IMR-90 (cell line): ENCODE measurements at regions of chr5 and their contacts with region 1.

Region 1: GRCh38 chr5:38994324-38994927 is 79.8 kb downstream of the RICTOR start:
- DNase-seq: peak; percentile 76
- ATAC-seq: peak; percentile 63
- H3K4me3 ChIP-seq: no peak overlapping the region
- H3K27ac ChIP-seq: no peak overlapping the region
- H3K4me1 ChIP-seq: no peaks in the 10 kb centered on the region
- H3K27me3 ChIP-seq: no peaks in the 10 kb centered on the region
- CTCF ChIP-seq: peak; percentile 67
- POLR2A ChIP-seq: no peak
- RAD21 ChIP-seq: peak; percentile 81

Region 2: DNA sequence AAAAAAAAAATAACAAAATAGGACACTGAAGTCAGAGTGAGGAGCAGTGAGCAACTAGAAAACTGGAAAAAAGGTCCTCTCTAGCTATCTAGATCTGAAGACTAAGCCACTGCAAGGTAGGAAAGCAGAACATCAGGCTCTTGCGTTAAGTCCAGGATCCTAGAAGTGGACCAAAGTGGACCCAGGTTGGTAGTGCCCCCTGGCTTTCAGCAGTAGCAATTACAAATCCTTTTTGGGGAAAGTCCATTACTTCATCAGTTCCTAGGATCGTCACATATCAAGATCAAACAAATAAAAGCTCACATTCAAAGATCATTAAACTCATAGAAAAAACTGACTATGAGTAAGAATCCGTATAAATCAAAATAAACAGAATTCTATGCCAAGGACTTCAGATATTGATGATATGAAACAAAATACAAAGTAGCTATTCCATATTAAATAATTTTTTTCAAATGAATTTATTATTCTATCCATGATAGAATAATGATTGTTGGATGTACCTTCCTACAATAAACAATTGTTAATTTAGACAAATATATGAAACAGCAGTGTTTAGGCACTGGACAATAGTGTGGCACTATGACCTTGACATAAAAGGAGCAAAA is 86.3 kb after region 1 on chr5:
- CTCF ChIA-PET with region 1: no interaction called
- POLR2A ChIA-PET with region 1: no interaction called
- dilution Hi-C with region 1: no loop called
- in situ Hi-C with region 1: no loop called
- intact Hi-C with region 1: loop called (anchors 1 kb)
- DNase-seq: peak; percentile 73
- ATAC-seq: peak; percentile 86
- H3K4me3 ChIP-seq: no peak overlapping the region
- H3K27ac ChIP-seq: no peak overlapping the region
- H3K4me1 ChIP-seq: no peaks in the 10 kb centered on the region
- H3K27me3 ChIP-seq: no peaks in the 10 kb centered on the region
- CTCF ChIP-seq: peak; percentile 75
- POLR2A ChIP-seq: no peak
- RAD21 ChIP-seq: peak; percentile 70

Region 3: GRCh38 chr5:39106322-39106721 is 111.9 kb after region 1 on chr5:
- CTCF ChIA-PET with region 1: no interaction called
- POLR2A ChIA-PET with region 1: no interaction called
- dilution Hi-C with region 1: no loop called
- in situ Hi-C with region 1: no loop called
- intact Hi-C with region 1: loop called (anchors 1 kb)
- DNase-seq: peak; percentile 27
- ATAC-seq: no peak
- H3K4me3 ChIP-seq: no peak overlapping the region
- H3K27ac ChIP-seq: no peak overlapping the region
- H3K4me1 ChIP-seq: peaks cover 9% of the 10 kb centered on the region
- H3K27me3 ChIP-seq: no peaks in the 10 kb centered on the region
- CTCF ChIP-seq: peak; percentile 45
- POLR2A ChIP-seq: no peak
- RAD21 ChIP-seq: no peak

Region 4: DNA sequence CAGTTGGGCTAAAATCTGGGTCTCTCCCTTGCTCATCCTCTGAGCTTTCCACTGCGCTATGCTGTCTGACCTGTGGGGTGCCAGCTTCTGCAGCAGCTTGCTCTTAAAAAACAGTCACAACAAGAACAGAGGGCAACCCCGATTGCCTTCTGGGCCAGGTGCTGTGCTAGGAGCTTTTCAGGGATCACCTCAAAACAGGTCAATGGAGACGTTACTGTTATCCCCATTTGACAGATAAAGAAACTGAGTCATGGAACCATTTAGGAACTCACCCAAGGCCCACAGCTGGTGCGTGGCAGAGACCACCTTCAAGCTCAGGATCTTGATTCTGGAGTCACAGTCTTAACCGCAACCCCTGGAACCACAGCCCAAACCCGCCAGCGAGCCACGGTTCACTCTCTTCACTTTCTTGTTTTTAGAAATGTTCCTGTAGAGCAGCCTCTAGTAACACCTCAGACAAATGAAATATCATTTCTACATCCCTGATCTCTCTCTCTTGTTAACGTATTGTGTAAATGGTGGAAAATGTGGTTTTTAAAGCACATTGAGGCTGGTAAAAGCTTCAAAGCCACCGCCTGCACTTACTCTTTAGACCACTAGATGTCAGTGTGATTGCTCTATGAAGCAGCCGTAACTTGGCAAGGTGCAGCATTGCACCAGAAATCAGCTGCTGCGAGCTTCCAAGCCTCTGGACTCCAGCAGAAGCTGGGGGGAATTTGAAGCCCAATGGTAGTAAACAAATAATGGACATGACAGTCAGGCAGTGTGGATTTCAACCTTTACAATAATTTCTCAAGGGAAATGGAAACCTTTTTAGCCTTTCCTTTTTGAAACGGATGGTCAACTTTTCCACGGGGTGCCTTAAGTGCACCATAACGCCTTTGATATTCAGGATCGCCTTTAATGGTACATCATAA is 223.2 kb after region 1 on chr5:
- CTCF ChIA-PET with region 1: no interaction called
- POLR2A ChIA-PET with region 1: no interaction called
- dilution Hi-C with region 1: no loop called
- in situ Hi-C with region 1: no loop called
- intact Hi-C with region 1: loop called (anchors 10 kb)
- DNase-seq: peak; percentile 80
- ATAC-seq: peak; percentile 94
- H3K4me3 ChIP-seq: no peak overlapping the region
- H3K27ac ChIP-seq: no peak overlapping the region
- H3K4me1 ChIP-seq: no peaks in the 10 kb centered on the region
- H3K27me3 ChIP-seq: no peaks in the 10 kb centered on the region; the same call in none of the 2 replicates
- CTCF ChIP-seq: peak; percentile 89
- POLR2A ChIP-seq: no peak
- RAD21 ChIP-seq: peak; percentile 76

Region 5: GRCh38 chr5:39228596-39228995 is 234.2 kb after region 1 on chr5:
- CTCF ChIA-PET with region 1: no interaction called
- POLR2A ChIA-PET with region 1: no interaction called
- dilution Hi-C with region 1: no loop called
- in situ Hi-C with region 1: no loop called
- intact Hi-C with region 1: no loop called
- DNase-seq: no peak
- ATAC-seq: no peak
- H3K4me3 ChIP-seq: no peak overlapping the region
- H3K27ac ChIP-seq: no peak overlapping the region
- H3K4me1 ChIP-seq: no peaks in the 10 kb centered on the region
- H3K27me3 ChIP-seq: peaks cover 12% of the 10 kb centered on the region
- CTCF ChIP-seq: no peak
- POLR2A ChIP-seq: no peak
- RAD21 ChIP-seq: no peak

Region 6: DNA sequence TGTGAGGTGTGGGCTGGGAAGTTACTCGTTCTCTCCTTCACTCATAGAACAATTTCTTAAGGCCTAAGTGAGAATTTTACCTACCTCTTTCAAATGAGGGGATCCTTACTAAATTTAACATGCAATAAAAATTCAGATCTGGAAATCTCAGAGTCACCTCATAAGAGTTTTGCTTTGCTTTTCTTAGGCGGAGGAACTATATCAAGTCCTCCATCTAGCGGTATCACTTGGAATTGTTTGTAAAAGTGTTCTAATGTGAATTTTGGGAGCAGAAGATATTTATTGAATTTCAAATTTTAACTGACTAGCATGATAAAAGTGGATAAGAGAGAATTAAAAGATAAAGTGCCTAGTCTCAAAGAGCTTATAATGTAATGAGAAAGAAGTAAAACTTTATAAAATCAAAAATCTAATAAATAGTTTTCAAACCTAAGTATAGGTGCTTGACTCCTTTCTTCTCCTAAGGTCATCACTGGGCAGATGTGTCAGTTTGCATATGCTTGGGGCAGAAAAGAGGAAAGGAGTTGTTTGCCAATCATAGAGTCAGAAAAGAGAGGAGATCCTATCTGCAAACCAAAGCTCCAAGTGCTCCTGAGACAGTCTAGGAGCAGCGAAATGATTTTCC is 576.1 kb after region 1 on chr5:
- CTCF ChIA-PET with region 1: no interaction called
- POLR2A ChIA-PET with region 1: no interaction called
- dilution Hi-C with region 1: no loop called
- in situ Hi-C with region 1: no loop called
- intact Hi-C with region 1: loop called (anchors 10 kb)
- DNase-seq: peak; percentile 61
- ATAC-seq: peak; percentile 79
- H3K4me3 ChIP-seq: no peak overlapping the region
- H3K27ac ChIP-seq: no peak overlapping the region
- H3K4me1 ChIP-seq: no peaks in the 10 kb centered on the region
- H3K27me3 ChIP-seq: peaks cover 13% of the 10 kb centered on the region
- CTCF ChIP-seq: peak; percentile 79
- POLR2A ChIP-seq: no peak
- RAD21 ChIP-seq: peak; percentile 82